ENCODE measurements at regions of chr16 and their contacts with region 1.

Region 1: DNA sequence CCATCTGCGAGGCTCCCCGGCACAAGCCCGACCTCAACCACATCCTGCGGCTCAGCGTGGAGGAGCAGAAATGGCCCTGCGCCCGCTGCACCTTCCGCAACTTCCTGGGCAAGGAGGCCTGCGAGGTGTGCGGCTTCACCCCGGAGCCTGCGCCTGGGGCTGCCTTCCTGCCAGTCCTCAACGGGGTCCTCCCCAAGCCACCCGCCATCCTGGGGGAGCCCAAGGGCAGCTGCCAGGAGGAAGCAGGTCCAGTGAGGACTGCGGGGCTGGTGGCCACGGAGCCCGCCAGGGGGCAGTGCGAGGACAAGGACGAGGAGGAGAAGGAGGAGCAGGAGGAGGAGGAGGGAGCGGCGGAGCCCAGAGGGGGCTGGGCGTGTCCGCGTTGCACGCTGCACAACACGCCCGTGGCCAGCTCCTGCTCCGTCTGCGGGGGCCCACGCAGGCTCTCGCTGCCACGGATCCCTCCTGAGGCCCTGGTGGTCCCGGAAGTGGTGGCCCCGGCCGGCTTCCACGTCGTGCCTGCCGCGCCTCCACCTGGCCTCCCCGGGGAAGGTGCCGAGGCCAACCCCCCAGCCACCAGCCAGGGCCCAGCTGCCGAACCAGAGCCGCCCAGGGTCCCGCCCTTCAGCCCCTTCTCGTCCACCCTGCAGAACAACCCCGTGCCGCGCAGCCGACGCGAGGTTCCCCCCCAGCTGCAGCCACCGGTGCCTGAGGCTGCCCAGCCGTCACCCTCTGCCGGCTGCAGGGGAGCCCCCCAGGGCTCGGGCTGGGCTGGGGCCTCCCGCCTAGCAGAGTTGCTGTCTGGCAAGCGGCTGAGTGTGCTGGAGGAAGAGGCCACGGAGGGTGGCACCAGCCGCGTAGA is 13.1 kb upstream of the PRR35 start:
- DNase-seq: peak in 1 of 2 donors; percentile 54
- H3K4me3 ChIP-seq: no peak overlapping the region
- CTCF ChIP-seq: no peak
- POLR2A ChIP-seq: no peak

Region 2: GRCh38 chr16:667780-668518 is 120.8 kb after region 1 on chr16 and contains the start of gene RHOT2:
- intact Hi-C with region 1: loop called (anchors 10 kb)
- DNase-seq: peak; percentile 86 to 98
- H3K4me3 ChIP-seq: peak within 1 kb of the TSS; percentile 80
- CTCF ChIP-seq: no peak
- POLR2A ChIP-seq: no peak
- total RNA-seq, gene RHOT2: 36.1 to 86.7 (median 58.7) TPM

Region 3: GRCh38 chr16:825341-826061 is 278.4 kb after region 1 on chr16:
- intact Hi-C with region 1: no loop called
- DNase-seq: no peak
- H3K4me3 ChIP-seq: no peak overlapping the region
- CTCF ChIP-seq: no peak
- POLR2A ChIP-seq: no peak

Measured in lower leg skin (tissue), 4 donors.